PC-9 (cell line): ENCODE measurements at regions of chr21 and their contacts with region 1.

Region 1: GRCh38 chr21:26148079-26148839 is 22.3 kb downstream of the APP start:
- DNase-seq: peak in 1 of 2 experiments; percentile 26
- H3K4me3 ChIP-seq: no peak overlapping the region
- H3K27ac ChIP-seq: peak overlapping the region; percentile 30
- H3K4me1 ChIP-seq: 0 out of 2 replicates have a peak, but pooled peaks cover 13% of the 10 kb centered on the region
- H3K27me3 ChIP-seq: no peaks in the 10 kb centered on the region
- CTCF ChIP-seq: no peak

Region 2: DNA sequence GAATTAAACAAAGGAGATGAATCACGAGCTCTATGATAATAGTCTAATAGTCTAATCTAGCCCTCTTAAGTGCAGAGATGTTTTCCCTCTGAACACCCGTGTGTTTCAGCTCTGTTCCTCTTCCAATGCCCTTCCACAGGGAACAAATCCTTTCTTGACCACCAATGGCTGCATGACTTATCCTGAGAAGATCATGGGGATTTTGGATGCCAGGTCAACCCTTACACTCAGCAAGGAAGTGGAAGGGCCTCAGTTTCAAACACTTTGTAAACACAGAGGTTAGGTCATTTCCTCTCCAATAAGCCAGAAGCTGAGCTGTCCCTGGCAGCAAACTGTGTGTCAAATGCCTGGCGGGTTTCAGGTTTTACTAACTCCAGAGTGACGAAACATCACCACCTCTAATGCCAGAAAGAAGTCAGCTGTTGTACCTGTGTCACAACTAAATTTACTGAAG is 213.5 kb before region 1 on chr21:
- CTCF ChIA-PET with region 1: no interaction called
- POLR2A ChIA-PET with region 1: interaction called, 25 read pairs
- intact Hi-C with region 1: no loop called
- DNase-seq: peak; percentile 56 to 89
- H3K4me3 ChIP-seq: no peak overlapping the region
- H3K27ac ChIP-seq: peak overlapping the region; percentile 65
- H3K4me1 ChIP-seq: peaks cover 8% of the 10 kb centered on the region
- H3K27me3 ChIP-seq: no peaks in the 10 kb centered on the region
- CTCF ChIP-seq: no peak

Region 3: GRCh38 chr21:26067836-26068594 is 80.2 kb before region 1 on chr21:
- CTCF ChIA-PET with region 1: no interaction called
- POLR2A ChIA-PET with region 1: interaction called, 24 read pairs
- intact Hi-C with region 1: no loop called
- DNase-seq: no peak
- H3K4me3 ChIP-seq: no peak overlapping the region
- H3K27ac ChIP-seq: no peak overlapping the region
- H3K4me1 ChIP-seq: no peaks in the 10 kb centered on the region
- H3K27me3 ChIP-seq: no peaks in the 10 kb centered on the region
- CTCF ChIP-seq: no peak